Dendritic cell treated with granulocyte-macrophage colony-stimulating factor and Interleukin-4, amounts not matched to agents 40 ng/mL and 50 ng/mL, for 4 days (primary cell): ENCODE measurements at regions of chr3 and their contacts with region 1.

Region 1: GRCh38 chr3:52123106-52123725 is 31.0 kb downstream of the POC1A start:
- H3K4me3 Mint-ChIP-seq: no peak overlapping the region
- H3K27ac Mint-ChIP-seq: peak overlapping the region; percentile 92
- H3K4me1 Mint-ChIP-seq: peaks cover 64% of the 10 kb centered on the region
- H3K27me3 Mint-ChIP-seq: no peaks in the 10 kb centered on the region

Region 2: DNA sequence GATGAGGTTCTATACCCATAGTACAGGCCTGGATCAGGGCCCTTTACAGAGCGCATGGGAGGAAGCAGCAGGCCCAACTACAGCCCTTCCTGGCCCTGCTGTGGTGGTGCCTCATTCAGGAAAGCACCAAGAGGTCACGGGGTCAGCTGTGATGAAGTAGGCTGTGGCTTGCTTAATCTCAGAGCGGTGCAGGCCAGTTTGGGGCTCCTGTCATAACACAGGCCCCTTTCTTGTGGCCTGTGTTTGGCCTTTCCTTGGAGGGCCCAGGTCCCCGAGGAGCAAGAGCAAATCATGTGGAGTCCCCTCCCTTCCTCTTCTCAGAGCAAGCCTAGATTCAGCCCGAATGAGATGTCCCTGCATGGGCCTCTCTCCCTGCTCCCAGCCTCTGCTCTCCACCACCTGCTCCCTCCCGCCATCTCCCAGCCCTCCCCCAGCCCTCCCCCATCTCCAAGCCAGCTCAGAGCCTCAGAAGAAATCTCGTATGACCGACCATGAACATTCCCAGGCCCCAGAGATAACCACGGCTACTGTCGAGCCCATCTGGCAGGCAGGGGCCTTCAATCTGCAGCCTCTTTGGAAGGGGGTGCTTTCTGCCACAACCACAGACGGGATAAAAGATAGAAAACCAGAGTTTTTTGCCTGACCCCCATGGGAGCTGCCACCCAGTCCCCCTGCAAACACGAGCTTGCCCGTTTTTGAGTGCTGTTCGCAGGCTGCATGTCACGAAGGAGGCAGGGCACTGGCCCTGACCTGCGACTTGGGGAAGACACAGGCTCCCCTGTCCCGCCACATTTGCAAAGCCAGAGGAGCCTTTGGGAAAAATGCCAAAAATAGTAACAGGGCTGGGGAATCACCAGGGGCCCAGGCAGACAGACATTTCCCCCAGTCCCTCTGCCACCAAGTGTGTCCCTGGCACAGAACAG is 34.5 kb before region 1 on chr3:
- intact Hi-C with region 1: loop called (anchors 5 kb)
- H3K4me3 Mint-ChIP-seq: no peak overlapping the region
- H3K27ac Mint-ChIP-seq: peak overlapping the region; percentile 71
- H3K4me1 Mint-ChIP-seq: peaks cover 77% of the 10 kb centered on the region
- H3K27me3 Mint-ChIP-seq: no peaks in the 10 kb centered on the region